Calu3 (cell line): ENCODE measurements at regions of chr5 and their contacts with region 1.

Region 1: GRCh38 chr5:158695595-158696330 is 404.0 kb downstream of the EBF1 start:
- DNase-seq: peak; percentile 79
- H3K4me3 Mint-ChIP-seq: no peak overlapping the region
- H3K27ac Mint-ChIP-seq: no peak overlapping the region
- H3K4me1 Mint-ChIP-seq: no peaks in the 10 kb centered on the region
- H3K27me3 Mint-ChIP-seq: peaks cover 55% of the 10 kb centered on the region
- CTCF ChIP-seq: peak; percentile 97

Region 2: DNA sequence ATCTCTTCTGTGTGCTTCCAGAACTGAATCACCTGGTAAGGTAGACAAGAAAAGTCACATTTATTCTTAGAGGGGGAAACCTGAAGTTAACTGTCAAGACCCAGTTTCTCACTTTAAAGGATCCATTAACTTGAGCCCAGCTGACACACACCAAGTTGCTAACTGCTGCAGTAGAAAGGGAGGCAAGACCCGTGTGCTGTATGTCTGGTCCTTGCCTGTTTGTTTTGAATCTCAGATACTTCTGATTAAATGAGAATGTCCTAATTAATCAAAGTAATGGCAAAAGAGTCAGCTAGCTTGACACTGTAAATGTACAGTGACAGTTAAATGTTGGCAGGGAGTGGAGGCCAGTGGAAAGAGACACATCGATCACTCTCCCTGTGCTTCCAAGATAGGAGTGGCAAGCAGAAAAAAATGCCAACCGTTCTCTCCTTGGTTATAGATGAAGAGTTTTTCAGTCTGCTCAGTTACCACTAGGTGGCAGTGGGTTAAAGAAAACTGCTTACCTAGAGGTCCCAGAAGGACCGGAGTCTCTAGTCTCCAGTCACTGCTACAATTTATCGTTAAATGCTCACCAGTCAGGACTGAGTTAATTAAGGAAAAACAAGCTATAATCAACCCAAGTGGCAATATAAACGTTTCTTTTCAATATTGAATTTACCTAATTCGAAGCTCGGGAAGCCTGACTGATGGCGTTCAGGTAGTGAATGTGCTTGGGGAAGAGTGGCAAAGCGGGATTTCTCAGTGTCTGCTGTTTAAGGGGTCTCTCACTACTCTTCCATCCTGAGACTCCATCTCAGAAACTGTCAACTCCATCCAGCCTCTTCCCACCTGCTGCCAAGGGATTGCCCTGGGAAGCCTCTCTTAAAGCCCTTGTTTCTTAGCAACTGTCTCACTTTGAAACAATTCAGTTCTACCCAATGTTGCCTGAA is 933.8 kb before region 1 on chr5:
- CTCF ChIA-PET with region 1: no interaction called
- intact Hi-C with region 1: loop called (anchors 5 kb)
- DNase-seq: peak; percentile 62
- H3K4me3 Mint-ChIP-seq: no peak overlapping the region
- H3K27ac Mint-ChIP-seq: no peak overlapping the region
- H3K4me1 Mint-ChIP-seq: no peaks in the 10 kb centered on the region
- H3K27me3 Mint-ChIP-seq: no peaks in the 10 kb centered on the region
- CTCF ChIP-seq: peak; percentile 58

Region 3: GRCh38 chr5:158174918-158175851 is 520.6 kb before region 1 on chr5:
- CTCF ChIA-PET with region 1: interaction called, 6 read pairs
- intact Hi-C with region 1: loop called (anchors 5 kb)
- DNase-seq: peak; percentile 71
- H3K4me3 Mint-ChIP-seq: no peak overlapping the region
- H3K27ac Mint-ChIP-seq: no peak overlapping the region
- H3K4me1 Mint-ChIP-seq: peaks cover 5% of the 10 kb centered on the region
- H3K27me3 Mint-ChIP-seq: peaks cover 37% of the 10 kb centered on the region
- CTCF ChIP-seq: peak; percentile 68

Region 4: GRCh38 chr5:158824241-158824882 is 128.6 kb after region 1 on chr5:
- CTCF ChIA-PET with region 1: no interaction called
- intact Hi-C with region 1: no loop called
- DNase-seq: no peak
- H3K4me3 Mint-ChIP-seq: no peak overlapping the region
- H3K27ac Mint-ChIP-seq: no peak overlapping the region
- H3K4me1 Mint-ChIP-seq: no peaks in the 10 kb centered on the region
- H3K27me3 Mint-ChIP-seq: peaks cover 94% of the 10 kb centered on the region
- CTCF ChIP-seq: no peak

Region 5: DNA sequence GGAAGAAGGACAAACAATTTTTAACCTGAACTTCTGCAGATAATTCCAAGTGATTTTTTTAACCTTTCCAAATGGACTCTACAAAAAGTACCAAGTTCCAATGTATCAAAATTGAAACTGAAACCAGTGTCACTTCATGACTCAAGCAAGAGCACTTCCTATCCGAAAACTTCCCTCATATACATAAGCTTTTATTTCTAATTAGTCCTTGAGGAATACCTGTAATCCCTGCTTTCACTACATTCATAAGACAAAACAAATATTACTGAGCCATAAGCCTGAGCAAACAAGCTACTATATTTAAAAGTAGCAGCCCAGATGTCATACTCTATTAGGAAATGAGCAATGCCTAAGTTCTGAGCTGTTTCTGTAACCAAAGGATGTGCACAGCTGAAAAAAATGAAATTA is 179.5 kb after region 1 on chr5:
- CTCF ChIA-PET with region 1: interaction called, 3 read pairs
- intact Hi-C with region 1: loop called (anchors 5 kb)
- DNase-seq: no peak
- H3K4me3 Mint-ChIP-seq: no peak overlapping the region
- H3K27ac Mint-ChIP-seq: no peak overlapping the region
- H3K4me1 Mint-ChIP-seq: no peaks in the 10 kb centered on the region
- H3K27me3 Mint-ChIP-seq: peaks cover 50% of the 10 kb centered on the region
- CTCF ChIP-seq: no peak

Region 6: GRCh38 chr5:158979749-158980521 is 284.2 kb after region 1 on chr5:
- CTCF ChIA-PET with region 1: no interaction called
- intact Hi-C with region 1: loop called (anchors 5 kb)
- DNase-seq: peak; percentile 27
- H3K4me3 Mint-ChIP-seq: peak overlapping the region; percentile 57
- H3K27ac Mint-ChIP-seq: peak overlapping the region; percentile 43
- H3K4me1 Mint-ChIP-seq: peaks cover 37% of the 10 kb centered on the region
- H3K27me3 Mint-ChIP-seq: no peaks in the 10 kb centered on the region
- CTCF ChIP-seq: no peak

Region 7: DNA sequence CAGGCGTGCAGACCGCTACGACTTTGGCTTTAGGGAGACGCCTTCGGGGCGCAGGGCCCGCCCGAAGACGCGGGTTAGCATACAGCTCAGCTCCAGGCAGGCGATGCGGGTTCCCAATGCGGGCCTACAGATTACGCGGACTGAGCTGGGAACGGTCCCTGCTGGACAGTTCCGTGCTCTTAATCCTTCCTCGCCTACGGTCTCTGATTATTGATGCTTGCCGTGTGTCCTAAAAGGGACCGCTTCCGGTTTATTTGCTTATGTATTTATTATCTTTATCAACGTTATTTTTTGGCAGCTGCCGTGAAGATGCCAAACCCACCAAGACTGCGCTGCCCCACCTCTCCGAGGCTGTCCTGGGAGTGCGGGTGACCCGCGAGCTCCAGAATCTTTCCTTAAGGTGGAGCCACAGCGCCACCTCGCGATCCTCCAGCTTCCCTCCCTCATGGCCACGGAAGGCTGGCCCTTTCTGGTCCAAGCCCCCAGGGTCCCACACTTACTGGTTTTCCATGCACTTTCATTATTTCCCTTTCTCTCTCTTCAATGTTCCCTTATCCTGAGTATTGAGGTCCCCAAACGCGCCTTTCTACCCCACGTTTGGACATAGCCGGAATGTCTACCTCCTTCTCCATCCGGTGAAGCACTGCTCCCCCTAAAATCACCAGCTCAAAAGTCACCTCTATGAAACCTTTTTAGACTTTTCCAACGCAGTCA is 411.0 kb after region 1 on chr5:
- CTCF ChIA-PET with region 1: interaction called, 108 read pairs
- intact Hi-C with region 1: loop called (anchors 1 kb)
- DNase-seq: peak; percentile 85
- H3K4me3 Mint-ChIP-seq: peak overlapping the region; percentile 10
- H3K27ac Mint-ChIP-seq: no peak overlapping the region
- H3K4me1 Mint-ChIP-seq: peaks cover 17% of the 10 kb centered on the region
- H3K27me3 Mint-ChIP-seq: peaks cover 94% of the 10 kb centered on the region
- CTCF ChIP-seq: peak; percentile 98

Region 8: DNA sequence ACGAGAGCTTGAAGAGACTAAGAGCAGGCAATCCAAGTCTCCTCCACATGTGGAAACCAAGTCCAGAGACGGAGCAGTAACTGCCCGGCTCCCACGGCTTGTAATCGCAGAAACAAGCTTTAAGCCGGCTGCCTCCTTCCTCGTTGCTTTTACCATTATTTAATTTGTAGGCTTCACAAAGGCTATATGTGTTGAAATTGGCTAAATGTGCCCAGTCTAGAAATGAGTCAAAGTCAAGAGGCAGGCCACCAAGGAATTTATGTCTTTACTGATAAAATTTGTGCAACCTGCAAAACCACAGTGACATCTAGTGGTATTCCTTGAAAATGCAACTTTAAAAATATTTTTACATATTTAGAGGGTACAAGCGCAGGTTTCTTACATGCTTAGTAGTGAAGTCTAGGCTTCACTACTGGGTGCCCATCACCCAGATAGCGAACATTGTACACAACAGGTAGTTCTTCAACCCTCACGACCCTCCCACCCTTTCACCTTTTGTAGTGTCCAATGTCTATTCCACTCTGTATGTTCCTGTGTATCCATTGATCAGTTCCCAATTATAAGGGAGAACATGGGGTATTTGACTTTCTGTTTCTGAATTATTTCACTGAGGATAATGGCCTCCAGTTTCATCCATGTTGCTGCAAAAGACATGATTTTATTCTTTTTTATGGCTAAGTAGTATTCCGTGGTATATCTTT is 437.4 kb after region 1 on chr5:
- CTCF ChIA-PET with region 1: interaction called, 13 read pairs
- intact Hi-C with region 1: loop called (anchors 1 kb)
- DNase-seq: peak; percentile 16
- H3K4me3 Mint-ChIP-seq: no peak overlapping the region
- H3K27ac Mint-ChIP-seq: no peak overlapping the region
- H3K4me1 Mint-ChIP-seq: peaks cover 8% of the 10 kb centered on the region
- H3K27me3 Mint-ChIP-seq: peaks cover 63% of the 10 kb centered on the region
- CTCF ChIP-seq: peak; percentile 67